ENCODE measurements at regions of chr13 and their contacts with region 1.

Region 1: DNA sequence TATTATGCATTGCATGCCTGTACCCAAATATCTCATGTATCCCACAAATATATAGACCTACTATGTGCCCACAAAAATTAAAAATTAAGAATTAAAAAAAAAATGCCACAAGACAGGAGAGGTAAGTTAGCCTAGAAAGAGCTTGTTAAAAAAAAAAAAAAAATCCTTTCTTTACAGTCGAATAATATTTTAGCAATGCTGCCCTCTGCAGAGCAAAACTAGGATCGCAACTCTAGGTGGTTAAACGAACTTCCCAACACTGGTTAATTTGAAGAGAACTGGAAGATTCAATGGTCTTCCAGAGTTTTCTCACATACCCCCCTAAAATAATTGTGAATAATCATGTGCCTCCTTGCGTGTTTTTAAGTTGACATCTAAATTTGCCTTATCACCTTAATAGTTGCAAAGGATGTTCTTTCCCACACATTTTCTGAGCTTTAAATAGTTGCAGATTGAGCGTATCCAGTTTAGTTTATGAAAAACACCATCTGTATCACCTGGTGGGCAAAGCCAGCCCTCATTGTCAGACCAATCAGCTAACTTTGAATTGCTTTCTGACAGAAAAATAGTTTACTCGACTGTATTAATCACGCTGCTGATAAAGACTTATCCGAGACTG is 47.4 kb upstream of the RCBTB2 start:
- DNase-seq: peak; percentile 59
- H3K4me3 ChIP-seq: no peak overlapping the region
- H3K27ac ChIP-seq: no peak overlapping the region
- H3K4me1 ChIP-seq: peaks cover 40% of the 10 kb centered on the region
- H3K27me3 ChIP-seq: no peaks in the 10 kb centered on the region
- CTCF ChIP-seq: peak; percentile 70 to 71

Region 2: DNA sequence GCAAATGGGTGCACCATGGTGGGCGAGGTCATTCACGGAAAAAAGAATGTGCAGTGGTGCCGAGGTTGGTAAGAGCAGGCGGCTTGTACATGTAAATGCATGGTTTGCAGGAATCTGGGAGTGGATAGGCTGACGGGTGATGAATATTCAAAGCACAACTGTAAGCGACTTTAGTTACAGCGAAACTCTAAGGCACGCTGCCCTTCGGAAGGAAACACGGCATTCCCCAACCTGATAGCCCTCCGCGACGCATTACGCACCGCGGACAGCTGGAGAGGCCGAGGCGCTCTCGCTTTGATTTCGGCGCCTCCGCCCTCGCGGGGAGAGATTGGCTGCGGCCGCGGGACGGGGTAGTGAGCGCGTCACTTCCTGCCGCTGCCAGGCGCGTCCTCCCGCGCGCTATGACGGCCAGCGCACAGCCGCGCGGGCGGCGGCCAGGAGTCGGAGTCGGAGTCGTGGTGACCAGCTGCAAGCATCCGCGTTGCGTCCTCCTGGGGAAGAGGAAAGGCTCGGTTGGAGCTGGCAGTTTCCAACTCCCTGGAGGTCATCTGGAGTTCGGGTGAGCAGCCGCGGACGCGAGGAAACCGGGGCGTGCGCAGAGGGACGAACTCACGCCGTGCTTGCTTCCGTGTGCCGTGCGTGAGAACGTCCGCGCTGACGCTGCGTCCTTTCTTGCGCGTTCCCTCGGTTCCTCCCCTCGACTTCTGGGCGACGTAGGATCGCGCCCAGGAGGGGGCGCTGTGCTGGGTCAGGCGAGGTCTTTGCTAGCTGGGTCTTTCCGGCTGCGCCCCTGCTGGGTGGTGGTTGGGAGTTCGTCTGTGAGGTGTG is 542.7 kb before region 1 on chr13 and contains the start of gene NUDT15:
- CTCF ChIA-PET with region 1: interaction called, 17 read pairs
- dilution Hi-C with region 1: no loop called
- in situ Hi-C with region 1: no loop called
- intact Hi-C with region 1: loop called (anchors 5 kb)
- DNase-seq: peak; percentile 96
- H3K4me3 ChIP-seq: peak within 1 kb of the TSS; percentile 55 to 73 (median 64)
- H3K27ac ChIP-seq: peak within 1 kb of the TSS; percentile 92
- H3K4me1 ChIP-seq: peaks cover 20% of the 10 kb centered on the region
- H3K27me3 ChIP-seq: no peaks in the 10 kb centered on the region
- CTCF ChIP-seq: peak; percentile 98 to 99
- total RNA-seq, gene NUDT15: 12.0 to 30.2 TPM

Region 3: DNA sequence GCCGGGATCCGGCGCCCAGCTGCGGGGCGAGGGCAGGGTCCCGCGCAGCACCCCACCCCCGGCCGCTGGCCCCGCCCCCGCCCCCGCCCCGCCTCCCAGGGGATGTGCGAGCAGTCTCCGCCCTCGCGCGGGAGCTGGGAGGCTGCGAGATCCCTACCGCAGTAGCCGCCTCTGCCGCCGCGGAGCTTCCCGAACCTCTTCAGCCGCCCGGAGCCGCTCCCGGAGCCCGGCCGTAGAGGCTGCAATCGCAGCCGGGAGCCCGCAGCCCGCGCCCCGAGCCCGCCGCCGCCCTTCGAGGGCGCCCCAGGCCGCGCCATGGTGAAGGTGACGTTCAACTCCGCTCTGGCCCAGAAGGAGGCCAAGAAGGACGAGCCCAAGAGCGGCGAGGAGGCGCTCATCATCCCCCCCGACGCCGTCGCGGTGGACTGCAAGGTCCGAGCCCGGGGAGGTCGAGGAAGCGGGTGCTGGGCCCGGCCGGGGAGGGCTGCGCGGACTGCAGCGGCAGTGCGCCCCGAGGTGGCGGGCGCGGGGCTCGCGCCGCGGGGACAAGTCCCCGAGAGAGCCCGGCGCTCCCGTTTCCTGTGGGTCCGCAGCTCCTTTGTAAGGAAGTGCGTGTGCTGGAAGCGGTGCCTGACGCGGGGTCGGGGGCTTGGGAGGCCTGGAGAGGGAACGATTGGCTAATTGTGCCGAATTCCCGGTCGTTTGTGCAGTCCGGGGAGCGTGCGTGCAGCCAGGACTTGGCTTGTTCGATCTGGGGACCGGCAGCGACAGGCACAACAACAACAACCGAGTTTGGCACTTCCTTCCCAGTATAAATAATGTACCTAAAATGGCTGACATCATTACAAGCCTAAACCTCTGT is 347.0 kb before region 1 on chr13 and contains the start of gene ITM2B:
- CTCF ChIA-PET with region 1: interaction called, 10 read pairs
- dilution Hi-C with region 1: no loop called
- in situ Hi-C with region 1: no loop called
- intact Hi-C with region 1: loop called (anchors 2 kb)
- DNase-seq: peak; percentile 64
- H3K4me3 ChIP-seq: peak within 1 kb of the TSS; percentile 89 to 99 (median 99)
- H3K27ac ChIP-seq: peak within 1 kb of the TSS; percentile 92
- H3K4me1 ChIP-seq: peaks cover 27% of the 10 kb centered on the region
- H3K27me3 ChIP-seq: no peaks in the 10 kb centered on the region
- CTCF ChIP-seq: peak in 1 of 2 donors; percentile 45
- total RNA-seq, gene ITM2B: 187 to 317 TPM

Region 4: DNA sequence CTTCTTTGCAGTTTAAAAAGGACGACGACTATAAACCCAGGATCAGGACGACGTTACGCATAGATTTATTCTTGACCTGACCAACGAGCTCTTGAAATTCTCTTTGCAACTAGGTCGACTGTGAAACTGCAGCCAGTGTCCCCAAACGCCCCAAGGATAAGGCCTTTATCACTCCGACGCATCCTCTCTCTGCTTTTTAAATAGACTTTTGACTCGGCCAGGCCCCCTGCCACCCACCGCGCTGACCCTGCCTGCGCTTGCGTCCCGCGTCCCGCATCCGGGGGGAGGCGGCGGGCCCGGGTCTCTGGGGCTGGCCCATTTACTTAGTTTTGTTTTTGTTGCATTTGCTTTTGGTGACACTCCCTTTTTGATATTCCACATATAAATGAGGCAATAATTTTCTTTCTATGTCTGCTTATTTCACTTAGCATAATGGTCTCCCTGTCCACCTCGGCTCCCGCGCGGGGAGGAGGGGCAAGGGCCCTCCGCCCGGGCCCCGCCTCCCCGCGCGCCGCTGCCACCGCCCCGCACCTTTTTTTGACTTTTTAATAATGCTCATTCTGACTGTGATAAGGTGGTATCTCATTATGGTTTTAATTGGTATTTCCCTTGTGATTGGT is 259.3 kb before region 1 on chr13:
- CTCF ChIA-PET with region 1: no interaction called
- dilution Hi-C with region 1: no loop called
- in situ Hi-C with region 1: no loop called
- intact Hi-C with region 1: no loop called
- DNase-seq: no peak
- H3K4me3 ChIP-seq: no peak overlapping the region
- H3K27ac ChIP-seq: no peak overlapping the region
- H3K4me1 ChIP-seq: no peaks in the 10 kb centered on the region
- H3K27me3 ChIP-seq: no peaks in the 10 kb centered on the region
- CTCF ChIP-seq: no peak

Region 5: GRCh38 chr13:48380581-48380980 is 199.7 kb before region 1 on chr13:
- CTCF ChIA-PET with region 1: no interaction called
- dilution Hi-C with region 1: no loop called
- in situ Hi-C with region 1: no loop called
- intact Hi-C with region 1: no loop called
- DNase-seq: no peak
- H3K4me3 ChIP-seq: no peak overlapping the region
- H3K27ac ChIP-seq: no peak overlapping the region
- H3K4me1 ChIP-seq: no peaks in the 10 kb centered on the region
- H3K27me3 ChIP-seq: no peaks in the 10 kb centered on the region
- CTCF ChIP-seq: no peak

Region 6: DNA sequence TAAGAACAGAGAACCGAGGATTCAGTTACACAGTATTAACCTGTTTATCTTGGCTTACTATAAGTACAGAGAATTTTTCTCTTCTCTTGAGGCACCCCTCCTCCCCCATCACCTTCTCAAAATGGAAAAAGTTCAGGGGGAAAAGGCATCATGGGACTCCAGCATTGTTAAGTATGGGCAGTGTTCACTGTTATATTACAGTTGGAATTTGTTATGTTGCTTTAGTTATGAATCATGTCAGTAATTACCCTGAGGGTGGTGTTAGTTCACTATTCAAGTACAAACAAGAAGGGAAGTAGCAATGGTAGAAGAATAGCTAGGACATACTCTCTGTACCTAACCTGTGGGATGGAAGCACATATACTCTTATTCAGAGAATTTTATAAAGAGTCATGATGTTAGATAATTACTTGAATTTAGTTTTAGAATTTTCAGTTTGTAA is 179.4 kb before region 1 on chr13:
- CTCF ChIA-PET with region 1: no interaction called
- dilution Hi-C with region 1: no loop called
- in situ Hi-C with region 1: no loop called
- intact Hi-C with region 1: loop called (anchors 2 kb)
- DNase-seq: peak; percentile 91
- H3K4me3 ChIP-seq: peak overlapping the region in 1 of 3 experiments; percentile 23
- H3K27ac ChIP-seq: peak overlapping the region; percentile 97
- H3K4me1 ChIP-seq: peaks cover 49% of the 10 kb centered on the region
- H3K27me3 ChIP-seq: no peaks in the 10 kb centered on the region
- CTCF ChIP-seq: no peak

Region 7: DNA sequence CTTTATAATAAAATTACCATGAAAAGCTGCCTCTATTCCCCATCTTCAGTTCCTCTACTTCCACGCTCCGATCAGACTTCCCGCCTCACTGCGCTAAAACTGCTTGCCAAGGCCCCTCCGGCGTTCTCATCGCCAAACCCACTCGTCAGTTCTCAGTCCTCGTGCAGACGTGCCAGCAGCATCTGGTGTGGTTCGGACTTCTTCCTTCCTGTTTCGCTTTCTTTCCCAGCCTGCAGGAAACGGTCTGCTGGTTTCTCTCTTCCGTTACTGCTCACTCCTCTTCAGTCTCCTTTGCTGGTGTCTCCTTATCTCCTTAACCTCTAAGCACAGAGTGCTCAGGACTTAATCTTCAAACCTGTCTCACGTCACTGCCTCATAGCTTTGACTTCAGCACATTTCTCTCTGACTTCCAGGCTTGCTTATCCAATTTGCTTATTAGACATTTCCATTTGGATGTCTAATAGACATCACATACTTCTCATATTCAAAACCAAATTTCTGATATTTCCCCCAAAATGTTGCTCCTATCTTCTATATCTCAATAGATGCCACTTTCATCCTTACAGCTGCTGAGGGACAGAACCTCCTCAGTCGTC is 87.7 kb before region 1 on chr13:
- CTCF ChIA-PET with region 1: no interaction called
- dilution Hi-C with region 1: loop called (anchors 5 kb)
- in situ Hi-C with region 1: no loop called
- intact Hi-C with region 1: no loop called
- DNase-seq: peak; percentile 57
- H3K4me3 ChIP-seq: peak overlapping the region in 1 of 3 experiments; percentile 12
- H3K27ac ChIP-seq: no peak overlapping the region
- H3K4me1 ChIP-seq: peaks cover 30% of the 10 kb centered on the region
- H3K27me3 ChIP-seq: no peaks in the 10 kb centered on the region
- CTCF ChIP-seq: no peak

Region 8: GRCh38 chr13:48532506-48533499 is 47.5 kb before region 1 on chr13 and contains the start of gene RCBTB2:
- CTCF ChIA-PET with region 1: no interaction called
- dilution Hi-C with region 1: no loop called
- in situ Hi-C with region 1: no loop called
- intact Hi-C with region 1: loop called (anchors 1 kb)
- DNase-seq: peak; percentile 95
- H3K4me3 ChIP-seq: peak within 1 kb of the TSS; percentile 65 to 78 (median 75)
- H3K27ac ChIP-seq: peak within 1 kb of the TSS; percentile 87
- H3K4me1 ChIP-seq: peaks cover 13% of the 10 kb centered on the region
- H3K27me3 ChIP-seq: no peaks in the 10 kb centered on the region
- CTCF ChIP-seq: peak in 1 of 2 donors; percentile 6
- total RNA-seq, gene RCBTB2: 4.9 to 12.0 TPM

Measured in mammary epithelial cell (primary cell).